Spleen (tissue), 13 donors: ENCODE measurements at regions of chr5 and their contacts with region 1.

Region 1: GRCh38 chr5:61658592-61659008 is 326.5 kb downstream of the ZSWIM6 start:
- DNase-seq: peak; percentile 94
- H3K4me3 ChIP-seq: no peak overlapping the region
- H3K27ac ChIP-seq: no peak overlapping the region
- H3K4me1 ChIP-seq: peaks cover 0 to 7% (median 0%) of the 10 kb centered on the region in 6 donors
- H3K27me3 ChIP-seq: peaks cover 0 to 7% (median 0%) of the 10 kb centered on the region in 7 donors
- CTCF ChIP-seq: peak; percentile 62 to 94 (median 89)
- POLR2A ChIP-seq: no peak

Region 2: GRCh38 chr5:61055434-61056006 is 603.1 kb before region 1 on chr5:
- intact Hi-C with region 1: loop called (anchors 10 kb)
- DNase-seq: no peak
- H3K4me3 ChIP-seq: no peak overlapping the region
- H3K27ac ChIP-seq: no peak overlapping the region
- H3K4me1 ChIP-seq: no peaks in the 10 kb centered on the region
- H3K27me3 ChIP-seq: no peaks in the 10 kb centered on the region
- CTCF ChIP-seq: peak in 9 of 11 experiments; percentile 11 to 64 (median 58)
- POLR2A ChIP-seq: no peak

Region 3: DNA sequence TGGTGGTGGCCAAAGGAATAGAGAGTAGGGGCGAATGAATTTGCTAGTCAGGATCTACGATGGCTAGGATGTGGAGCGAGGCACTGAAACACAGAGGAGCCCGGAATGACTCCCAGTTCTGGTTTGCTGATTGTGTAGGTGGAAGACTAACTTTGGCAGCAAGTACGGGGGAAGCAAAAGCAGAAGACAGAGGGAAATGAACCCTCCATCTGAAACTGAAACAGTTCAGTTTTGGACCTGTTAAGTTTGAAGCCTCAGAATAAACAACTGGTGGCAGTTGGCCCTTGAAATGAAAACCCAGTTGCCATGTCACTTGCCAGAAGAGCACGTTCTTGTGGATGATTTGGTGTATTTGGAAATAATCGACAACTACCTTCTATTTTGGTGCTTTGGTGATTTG is 480.9 kb before region 1 on chr5:
- intact Hi-C with region 1: loop called (anchors 10 kb)
- DNase-seq: no peak
- H3K4me3 ChIP-seq: no peak overlapping the region
- H3K27ac ChIP-seq: peak overlapping the region in 3 of 8 donors; percentile 3 to 38 (median 6)
- H3K4me1 ChIP-seq: peaks cover 0 to 33% (median 8%) of the 10 kb centered on the region in 6 donors
- H3K27me3 ChIP-seq: no peaks in the 10 kb centered on the region
- CTCF ChIP-seq: no peak
- POLR2A ChIP-seq: no peak

Region 4: DNA sequence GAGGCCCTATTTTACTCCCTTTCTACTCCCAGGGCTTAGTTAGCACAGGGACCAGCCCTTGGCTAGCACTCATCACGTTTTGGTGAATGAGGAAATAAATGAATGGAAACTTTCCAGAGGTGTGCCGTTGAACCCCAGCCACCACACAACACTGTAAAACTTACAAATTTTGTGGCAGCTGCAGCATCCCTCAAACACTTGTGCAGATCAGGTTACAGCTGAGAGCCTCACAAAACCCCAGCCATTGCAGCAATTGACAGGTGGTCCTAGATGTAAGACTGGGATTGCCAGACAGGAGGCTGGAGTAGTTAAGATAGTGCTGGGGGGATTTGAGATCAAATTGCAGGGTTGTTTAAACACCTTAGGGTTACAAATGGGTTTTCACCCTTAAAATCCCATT is 165.2 kb after region 1 on chr5:
- intact Hi-C with region 1: no loop called
- DNase-seq: no peak
- H3K4me3 ChIP-seq: no peak overlapping the region
- H3K27ac ChIP-seq: no peak overlapping the region
- H3K4me1 ChIP-seq: no peaks in the 10 kb centered on the region
- H3K27me3 ChIP-seq: no peaks in the 10 kb centered on the region
- CTCF ChIP-seq: no peak
- POLR2A ChIP-seq: no peak